Posterior vena cava (tissue), 2 donors: ENCODE measurements at regions of chr17 and their contacts with region 1.

Region 1: DNA sequence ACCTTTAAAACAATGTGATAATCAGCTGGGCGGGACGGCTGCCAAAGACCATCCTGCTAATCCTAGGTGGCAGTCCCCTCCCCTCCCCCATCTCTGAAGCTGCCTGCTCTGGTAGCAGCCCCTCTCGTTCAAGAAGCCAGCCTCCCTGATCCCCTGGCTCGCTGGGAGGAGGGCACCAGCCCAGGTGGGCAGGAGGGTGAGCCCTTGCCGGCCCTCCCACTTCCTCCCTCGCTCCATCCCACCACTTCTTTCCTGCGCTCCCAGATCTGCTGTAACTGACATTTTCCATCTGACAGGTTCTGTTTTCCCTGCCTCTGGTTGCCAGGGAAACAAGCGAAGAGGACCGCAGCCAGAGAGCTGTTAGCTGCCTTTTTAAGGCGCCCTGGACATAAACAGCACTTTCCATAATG is 155.7 kb upstream of the TNRC6C start:
- DNase-seq: peak; percentile 81

Region 2: GRCh38 chr17:76515274-76515949 is 1287.4 kb before region 1 on chr17:
- intact Hi-C with region 1: no loop called
- DNase-seq: peak; percentile 93

Region 3: DNA sequence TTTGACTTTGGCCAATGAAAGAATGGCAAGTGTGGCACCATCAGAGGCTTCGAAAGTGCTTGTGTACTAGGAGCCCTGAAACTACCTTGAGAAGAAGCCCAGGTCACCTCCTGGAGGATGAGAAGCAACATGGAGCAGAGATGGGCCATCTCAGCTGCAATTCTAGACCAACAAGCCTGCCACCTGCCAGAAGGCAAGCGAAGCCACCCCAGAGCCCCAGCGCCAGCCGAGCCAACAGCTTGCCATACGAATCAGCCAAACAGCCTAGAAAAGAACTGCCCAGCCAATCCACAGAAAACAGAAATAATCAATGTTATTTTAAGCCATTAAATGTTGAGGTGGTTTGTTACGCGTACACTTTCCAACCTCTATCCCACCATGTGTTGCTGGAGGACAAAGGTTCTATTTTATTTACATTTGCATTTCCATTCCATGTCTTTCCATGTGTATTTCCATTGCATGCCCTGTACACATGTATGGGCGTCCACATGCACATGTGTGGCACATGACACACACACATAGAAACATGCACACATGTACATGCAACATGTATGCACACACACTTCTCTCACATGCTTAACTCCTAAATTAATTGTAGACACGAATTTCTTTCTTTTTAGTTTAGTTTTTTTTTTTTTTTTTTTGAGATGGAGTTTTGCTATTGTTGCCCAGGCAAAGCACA is 11.4 kb after region 1 on chr17:
- intact Hi-C with region 1: loop called in 1 of 2 experiments (anchors 1 kb)
- DNase-seq: no peak